Transverse colon (tissue), 4 donors: ENCODE measurements at regions of chr6 and their contacts with region 1.

Region 1: GRCh38 chr6:64896939-64897338 is 810.1 kb downstream of the EYS start:
- DNase-seq: no peak
- H3K4me3 ChIP-seq: no peak overlapping the region
- H3K27ac ChIP-seq: no peak overlapping the region
- H3K4me1 ChIP-seq: no peaks in the 10 kb centered on the region
- H3K27me3 ChIP-seq: no peaks in the 10 kb centered on the region
- CTCF ChIP-seq: no peak
- EP300 ChIP-seq: no peak
- POLR2A ChIP-seq: no peak

Region 2: GRCh38 chr6:64815718-64816117 is 81.2 kb before region 1 on chr6:
- in situ Hi-C with region 1: no loop called
- intact Hi-C with region 1: no loop called
- DNase-seq: no peak
- H3K4me3 ChIP-seq: no peak overlapping the region
- H3K27ac ChIP-seq: no peak overlapping the region
- H3K4me1 ChIP-seq: peaks cover 0 to 8% (median 0%) of the 10 kb centered on the region in 4 donors
- H3K27me3 ChIP-seq: no peaks in the 10 kb centered on the region
- CTCF ChIP-seq: no peak
- EP300 ChIP-seq: no peak
- POLR2A ChIP-seq: no peak

Region 3: DNA sequence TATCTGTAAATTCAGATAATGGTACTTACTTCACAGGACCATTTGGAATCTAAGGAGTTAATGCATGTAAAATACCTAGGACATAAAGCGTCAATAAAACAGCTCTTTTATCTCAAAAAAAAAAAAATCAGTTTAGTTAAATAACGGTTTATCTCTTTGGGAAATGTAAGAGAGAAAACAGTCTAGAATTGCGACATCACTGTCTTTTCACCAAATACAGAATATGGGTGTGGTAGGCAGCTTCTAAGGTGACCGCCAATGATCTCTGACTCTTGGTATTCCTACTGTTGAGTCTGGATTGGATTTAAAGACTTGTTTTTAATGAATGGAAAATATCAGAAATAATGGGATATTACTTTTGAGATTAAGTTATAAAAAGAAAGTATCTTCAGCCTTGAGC is 698.6 kb after region 1 on chr6:
- in situ Hi-C with region 1: no loop called
- intact Hi-C with region 1: loop called (anchors 5 kb)
- DNase-seq: no peak
- H3K4me3 ChIP-seq: no peak overlapping the region
- H3K27ac ChIP-seq: no peak overlapping the region
- H3K4me1 ChIP-seq: no peaks in the 10 kb centered on the region
- H3K27me3 ChIP-seq: no peaks in the 10 kb centered on the region
- CTCF ChIP-seq: no peak
- EP300 ChIP-seq: no peak
- POLR2A ChIP-seq: no peak